Activated CD8-positive, alpha-beta T cell treated with anti-CD3 and anti-CD28 coated beads for 36 hours (primary cell): ENCODE measurements at regions of chr16 and their contacts with region 1.

Region 1: DNA sequence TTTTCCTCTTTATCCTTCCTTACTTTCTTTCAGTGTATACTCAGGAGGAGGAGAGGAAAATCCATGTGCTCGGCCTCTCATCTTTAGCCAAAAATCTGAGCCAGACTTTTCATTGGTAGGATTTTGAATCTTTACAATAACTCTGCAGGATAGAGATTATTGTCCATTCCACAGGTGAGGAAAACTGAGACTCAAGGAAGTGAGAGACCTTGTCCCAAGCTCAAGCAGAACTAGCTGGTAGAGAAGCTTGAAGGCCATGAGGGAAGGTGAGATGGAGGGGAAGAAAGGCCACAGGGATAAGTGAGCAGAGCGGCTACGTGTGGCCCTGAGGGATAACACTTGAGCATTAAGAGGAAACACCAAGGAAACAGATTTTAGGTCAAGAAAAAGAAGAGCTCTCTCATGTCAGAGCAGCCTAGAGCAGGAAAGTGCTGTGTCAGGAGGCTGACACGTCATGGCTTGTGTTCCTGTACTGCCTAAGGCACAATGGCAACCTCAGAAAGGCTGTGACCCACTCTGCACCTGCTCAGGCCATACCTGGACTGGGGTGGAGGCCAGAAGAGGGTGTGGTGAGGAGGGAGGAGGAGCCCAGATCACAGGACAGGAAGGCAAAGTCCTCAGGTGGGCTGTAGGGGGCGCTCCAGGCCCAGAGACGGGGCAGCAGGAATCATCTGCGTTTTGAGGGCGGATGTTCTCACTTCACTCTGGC is 11.9 kb downstream of the MT4 start:
- DNase-seq: peak; percentile 91
- ATAC-seq: peak; percentile 100
- H3K4me3 Mint-ChIP-seq: no peak overlapping the region
- H3K27ac Mint-ChIP-seq: peak overlapping the region; percentile 47
- H3K4me1 Mint-ChIP-seq: peaks cover 4% of the 10 kb centered on the region
- H3K27me3 Mint-ChIP-seq: no peaks in the 10 kb centered on the region
- CTCF ChIP-seq: peak; percentile 84

Region 2: DNA sequence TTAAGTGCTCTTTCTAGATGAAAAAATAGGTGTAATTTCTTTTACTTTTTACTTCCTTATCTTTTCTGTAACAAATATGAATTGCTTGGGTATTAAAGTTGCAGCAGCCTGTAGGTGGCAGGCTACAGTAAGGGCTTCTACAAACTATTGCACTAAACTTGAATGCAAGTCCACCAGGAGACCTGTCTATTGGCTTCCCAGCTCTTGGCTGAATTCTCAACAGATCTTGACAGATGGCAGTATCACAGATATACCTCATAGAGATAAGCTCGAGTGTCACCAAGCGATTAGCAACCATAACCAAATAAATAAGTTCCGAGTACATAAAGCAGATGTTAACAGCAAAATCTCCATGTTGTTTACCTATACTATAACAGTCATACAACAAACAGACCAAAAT is 62.8 kb before region 1 on chr16:
- CTCF ChIA-PET with region 1: interaction called, 10 read pairs
- POLR2A ChIA-PET with region 1: no interaction called
- intact Hi-C with region 1: no loop called
- DNase-seq: peak; percentile 72
- ATAC-seq: peak; percentile 88
- H3K4me3 Mint-ChIP-seq: no peak overlapping the region
- H3K27ac Mint-ChIP-seq: no peak overlapping the region
- H3K4me1 Mint-ChIP-seq: peaks cover 42% of the 10 kb centered on the region
- H3K27me3 Mint-ChIP-seq: no peaks in the 10 kb centered on the region
- CTCF ChIP-seq: peak; percentile 65

Region 3: GRCh38 chr16:56525236-56525635 is 51.5 kb before region 1 on chr16:
- CTCF ChIA-PET with region 1: interaction called, 10 read pairs
- POLR2A ChIA-PET with region 1: no interaction called
- intact Hi-C with region 1: no loop called
- DNase-seq: no peak
- ATAC-seq: no peak
- H3K4me3 Mint-ChIP-seq: no peak overlapping the region
- H3K27ac Mint-ChIP-seq: no peak overlapping the region
- H3K4me1 Mint-ChIP-seq: peaks cover 5% of the 10 kb centered on the region
- H3K27me3 Mint-ChIP-seq: no peaks in the 10 kb centered on the region
- CTCF ChIP-seq: no peak

Region 4: GRCh38 chr16:56589141-56590039 is 12.7 kb after region 1 on chr16 and contains the start of gene MT3:
- CTCF ChIA-PET with region 1: interaction called, 17 read pairs
- POLR2A ChIA-PET with region 1: no interaction called
- intact Hi-C with region 1: no loop called
- DNase-seq: peak; percentile 68
- ATAC-seq: peak; percentile 89
- H3K4me3 Mint-ChIP-seq: peak within 1 kb of the TSS; percentile 78
- H3K27ac Mint-ChIP-seq: peak within 1 kb of the TSS; percentile 2
- H3K4me1 Mint-ChIP-seq: peaks cover 9% of the 10 kb centered on the region
- H3K27me3 Mint-ChIP-seq: peaks cover 12% of the 10 kb centered on the region
- CTCF ChIP-seq: no peak
- total RNA-seq, gene MT3: 30.7 to 33.6 TPM

Region 5: DNA sequence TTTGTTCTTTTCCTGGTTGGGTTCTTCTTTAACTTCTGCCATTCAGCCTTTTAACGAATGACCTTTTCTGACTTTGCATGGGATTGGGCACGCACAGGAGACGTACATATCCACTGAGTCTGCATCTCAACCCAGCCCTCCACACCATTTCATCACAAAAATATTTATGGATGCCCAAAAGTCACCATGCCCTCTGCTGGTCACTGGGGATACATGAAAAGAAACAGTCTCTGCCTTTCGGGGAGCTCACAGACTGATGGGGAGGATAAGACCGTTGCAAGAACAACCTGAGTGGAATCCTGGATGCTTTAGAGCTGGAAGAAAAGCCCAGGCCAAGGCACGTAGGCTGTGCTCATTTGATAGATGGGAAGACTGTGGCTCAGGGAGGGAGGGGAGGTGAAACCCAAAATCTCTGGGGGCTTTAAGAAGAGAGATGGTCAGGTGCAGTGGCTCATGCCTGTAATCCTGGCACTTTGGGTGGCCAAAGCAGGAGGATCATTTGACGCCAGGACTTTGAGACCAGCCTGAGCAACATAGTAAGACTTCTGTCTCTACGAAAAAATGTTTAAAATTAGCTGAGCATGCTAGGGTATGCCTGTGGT is 23.8 kb after region 1 on chr16:
- CTCF ChIA-PET with region 1: interaction called, 32 read pairs
- POLR2A ChIA-PET with region 1: interaction called, 3 read pairs
- intact Hi-C with region 1: no loop called
- DNase-seq: peak; percentile 67
- ATAC-seq: peak; percentile 81
- H3K4me3 Mint-ChIP-seq: no peak overlapping the region
- H3K27ac Mint-ChIP-seq: no peak overlapping the region
- H3K4me1 Mint-ChIP-seq: peaks cover 3% of the 10 kb centered on the region
- H3K27me3 Mint-ChIP-seq: peaks cover 6% of the 10 kb centered on the region
- CTCF ChIP-seq: peak; percentile 69

Region 6: GRCh38 chr16:56691885-56692284 is 115.1 kb after region 1 on chr16:
- CTCF ChIA-PET with region 1: interaction called, 30 read pairs
- POLR2A ChIA-PET with region 1: no interaction called
- intact Hi-C with region 1: no loop called
- DNase-seq: no peak
- ATAC-seq: no peak
- H3K4me3 Mint-ChIP-seq: no peak overlapping the region
- H3K27ac Mint-ChIP-seq: no peak overlapping the region
- H3K4me1 Mint-ChIP-seq: no peaks in the 10 kb centered on the region
- H3K27me3 Mint-ChIP-seq: no peaks in the 10 kb centered on the region
- CTCF ChIP-seq: no peak

Region 7: DNA sequence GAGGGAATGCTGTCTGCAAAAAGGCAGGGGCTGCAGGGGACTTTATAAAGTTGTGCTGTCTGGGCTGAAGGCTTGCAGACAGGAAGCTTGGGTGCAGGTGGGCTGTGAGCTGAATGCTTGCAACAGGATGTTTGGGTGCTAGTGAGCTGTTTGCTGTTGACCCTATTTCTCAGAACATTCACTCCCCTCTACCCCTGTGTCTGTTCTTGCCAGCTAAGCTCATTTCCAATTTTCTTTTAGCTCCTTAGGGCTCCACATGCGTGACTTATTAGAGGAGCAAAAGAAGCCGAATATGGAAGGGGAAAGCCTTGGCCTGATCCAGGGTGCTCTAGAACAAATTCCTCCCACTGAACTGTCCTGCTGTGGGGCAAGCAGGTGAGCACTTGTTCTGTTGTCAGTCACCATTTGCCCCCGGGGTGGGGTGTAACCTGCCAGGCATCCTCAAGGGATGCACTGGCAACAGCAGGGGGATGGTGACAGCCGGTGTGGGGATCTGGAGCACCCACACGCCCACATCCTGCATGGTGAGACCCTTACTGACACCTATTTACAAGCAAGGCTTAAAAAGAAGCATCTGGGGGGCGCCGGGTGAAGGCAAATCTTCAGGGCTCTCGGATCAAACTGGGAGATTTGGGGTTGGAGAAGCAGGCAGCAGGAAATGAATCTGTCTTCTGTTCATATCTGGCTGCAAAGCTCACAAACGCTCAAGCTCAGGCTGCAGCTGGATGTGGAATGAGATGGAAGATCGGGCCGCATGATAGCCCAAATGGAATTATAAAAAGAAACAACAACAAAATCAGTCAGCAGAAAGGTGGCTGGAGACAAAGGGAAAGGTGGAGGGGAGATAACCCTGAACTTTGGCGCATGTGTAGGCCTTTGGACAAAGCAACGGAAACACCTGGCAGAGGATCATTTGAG is 132.0 kb after region 1 on chr16:
- CTCF ChIA-PET with region 1: interaction called, 130 read pairs
- POLR2A ChIA-PET with region 1: interaction called, 3 read pairs
- intact Hi-C with region 1: no loop called
- DNase-seq: peak; percentile 63
- ATAC-seq: peak; percentile 82
- H3K4me3 Mint-ChIP-seq: peak overlapping the region; percentile 77
- H3K27ac Mint-ChIP-seq: peak overlapping the region; percentile 96
- H3K4me1 Mint-ChIP-seq: peaks cover 56% of the 10 kb centered on the region
- H3K27me3 Mint-ChIP-seq: no peaks in the 10 kb centered on the region
- CTCF ChIP-seq: no peak